ENCODE measurements at regions of chr9 and their contacts with region 1.

Region 1: DNA sequence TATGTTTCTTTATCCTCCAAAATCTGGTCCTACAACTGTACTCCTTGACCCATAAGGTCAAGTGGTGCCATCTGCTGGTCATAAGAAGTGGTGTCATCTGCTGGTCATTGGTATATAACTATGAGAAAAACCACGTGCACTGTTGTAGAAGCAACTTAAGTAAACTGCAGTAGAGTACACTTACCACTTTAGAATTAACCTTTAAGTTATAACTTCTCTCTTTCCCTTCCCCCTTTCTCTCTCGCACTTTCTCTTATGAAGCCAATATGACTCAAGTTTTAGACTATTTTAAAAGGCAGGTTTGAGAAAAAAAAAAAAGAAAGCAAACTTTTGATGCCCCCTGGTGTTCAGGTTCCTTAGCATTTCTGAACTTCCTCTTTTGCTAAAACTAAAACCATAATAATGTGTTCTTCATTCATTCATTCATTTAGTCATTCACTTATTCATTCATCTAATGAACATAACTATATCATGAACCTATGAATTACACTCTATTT is 12.8 kb upstream of the MTAP start:
- DNase-seq: peak; percentile 39 to 69 (median 46)
- ATAC-seq: peak; percentile 91 to 92
- H3K4me3 ChIP-seq: no peak overlapping the region
- H3K27ac ChIP-seq: no peak overlapping the region
- H3K4me1 ChIP-seq: no peaks in the 10 kb centered on the region
- H3K27me3 ChIP-seq: no peaks in the 10 kb centered on the region

Region 2: GRCh38 chr9:21244836-21245235 is 544.8 kb before region 1 on chr9:
- intact Hi-C with region 1: loop called in 1 of 4 experiments (anchors 10 kb)
- DNase-seq: no peak
- ATAC-seq: no peak
- H3K4me3 ChIP-seq: no peak overlapping the region
- H3K27ac ChIP-seq: no peak overlapping the region
- H3K4me1 ChIP-seq: no peaks in the 10 kb centered on the region
- H3K27me3 ChIP-seq: no peaks in the 10 kb centered on the region

Region 3: GRCh38 chr9:21317956-21318923 is 471.3 kb before region 1 on chr9:
- intact Hi-C with region 1: loop called in 3 of 4 experiments (anchors 5 to 10 kb)
- DNase-seq: peak in 2 of 3 donors; percentile 11 to 54
- ATAC-seq: peak; percentile 74 to 76
- H3K4me3 ChIP-seq: no peak overlapping the region
- H3K27ac ChIP-seq: no peak overlapping the region
- H3K4me1 ChIP-seq: peaks cover 1% of the 10 kb centered on the region
- H3K27me3 ChIP-seq: no peaks in the 10 kb centered on the region

Region 4: GRCh38 chr9:21326526-21327139 is 463.0 kb before region 1 on chr9:
- intact Hi-C with region 1: loop called in 2 of 4 experiments (anchors 5 to 10 kb)
- DNase-seq: no peak
- ATAC-seq: peak; percentile 71 to 72
- H3K4me3 ChIP-seq: no peak overlapping the region
- H3K27ac ChIP-seq: no peak overlapping the region
- H3K4me1 ChIP-seq: peaks cover 2% of the 10 kb centered on the region
- H3K27me3 ChIP-seq: no peaks in the 10 kb centered on the region

Region 5: GRCh38 chr9:21408817-21409216 is 380.8 kb before region 1 on chr9 and contains the start of gene IFNA8:
- intact Hi-C with region 1: loop called in 1 of 4 experiments (anchors 5 kb)
- DNase-seq: no peak
- ATAC-seq: no peak
- H3K4me3 ChIP-seq: no peak within 1 kb of the TSS
- H3K27ac ChIP-seq: no peak within 1 kb of the TSS
- H3K4me1 ChIP-seq: no peaks in the 10 kb centered on the region
- H3K27me3 ChIP-seq: no peaks in the 10 kb centered on the region
- total RNA-seq, gene IFNA8: not detected

Region 6: DNA sequence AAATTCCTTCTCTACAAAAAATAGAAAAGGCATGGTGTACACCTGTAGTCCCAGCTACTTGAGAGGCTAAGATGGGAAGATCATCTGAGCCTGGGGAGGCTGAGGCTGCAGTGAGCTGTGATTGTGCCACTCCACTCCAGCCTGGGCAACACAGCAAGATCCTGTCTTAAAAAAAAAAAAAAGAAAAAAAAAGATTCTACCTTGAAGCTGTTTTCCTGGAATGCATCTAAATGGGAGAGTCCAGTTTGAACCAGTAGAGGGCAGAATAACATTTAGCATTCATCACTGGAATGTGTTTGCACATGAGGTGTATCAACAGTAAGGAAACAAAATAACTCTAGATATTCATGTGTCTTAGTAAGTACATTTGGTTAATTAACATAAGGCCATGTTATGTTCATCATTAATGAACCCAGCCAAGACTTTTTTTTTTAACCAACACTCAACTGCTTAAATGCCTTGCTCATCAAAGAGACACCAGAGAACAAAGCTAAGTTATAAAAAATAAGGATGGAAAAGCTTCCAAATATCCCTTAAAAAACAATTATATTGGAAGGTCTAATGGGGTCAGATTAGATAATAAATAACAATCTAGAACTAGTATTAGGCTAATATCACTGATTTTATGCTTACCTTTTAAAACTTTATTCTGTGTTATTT is 323.6 kb before region 1 on chr9:
- intact Hi-C with region 1: loop called in 1 of 4 experiments (anchors 10 kb)
- DNase-seq: no peak
- ATAC-seq: no peak
- H3K4me3 ChIP-seq: no peak overlapping the region
- H3K27ac ChIP-seq: no peak overlapping the region
- H3K4me1 ChIP-seq: no peaks in the 10 kb centered on the region
- H3K27me3 ChIP-seq: no peaks in the 10 kb centered on the region